ENCODE measurements at regions of chr2 and their contacts with region 1.

Region 1: GRCh38 chr2:44955593-44956392 is 14.3 kb downstream of the SIX3 start:
- DNase-seq: no peak
- ATAC-seq: peak; percentile 91
- H3K4me3 ChIP-seq: peak overlapping the region; percentile 57; the same call in 1 of the 2 replicates
- H3K27ac ChIP-seq: no peak overlapping the region
- H3K4me1 ChIP-seq: no peaks in the 10 kb centered on the region; the same call in 1 of the 2 replicates
- H3K27me3 ChIP-seq: peaks cover 6 to 24% of the 10 kb centered on the region in 2 experiments
- CTCF ChIP-seq: peak; percentile 80 to 99 (median 92)
- EP300 ChIP-seq: no peak
- POLR2A ChIP-seq: no peak
- RAD21 ChIP-seq: peak; percentile 91

Region 2: DNA sequence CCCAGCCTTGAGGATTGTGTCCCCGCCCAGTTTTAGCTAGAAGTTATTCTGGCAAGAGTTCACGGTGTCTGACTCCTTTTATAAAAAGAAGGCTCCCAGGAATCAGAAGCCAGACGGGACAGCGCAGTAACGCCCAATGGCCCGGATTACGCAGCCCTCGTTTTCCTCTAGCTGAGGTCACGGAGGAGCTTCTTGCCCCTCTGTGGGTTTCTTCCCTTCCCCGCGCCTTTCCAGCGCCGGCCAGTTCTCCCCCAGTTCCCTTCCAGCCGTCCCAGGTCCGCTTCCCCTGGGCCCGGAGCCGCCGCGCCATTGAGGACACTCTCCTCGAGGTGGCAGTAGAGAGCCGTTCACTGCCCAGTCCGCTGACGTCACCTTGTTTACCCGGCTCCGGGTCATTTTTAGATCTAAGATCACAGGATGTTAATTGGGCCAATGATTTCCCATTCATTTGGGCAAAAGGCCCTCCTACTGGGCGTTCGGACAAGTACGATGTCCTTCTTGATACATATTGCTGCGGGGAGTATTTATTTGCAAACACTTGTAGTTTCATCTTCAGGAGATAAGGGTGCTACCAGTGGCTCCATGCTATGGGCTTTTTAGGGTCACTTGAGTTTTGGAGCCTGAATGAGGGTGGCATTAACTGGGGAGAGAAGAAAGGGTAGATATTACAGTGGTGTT is 868.6 kb before region 1 on chr2:
- CTCF ChIA-PET with region 1: interaction called, 9 read pairs
- POLR2A ChIA-PET with region 1: no interaction called
- RAD21 ChIA-PET with region 1: no interaction called
- SMC1A ChIA-PET with region 1: interaction called, 11 read pairs
- in situ Hi-C with region 1: no loop called
- intact Hi-C with region 1: loop called (anchors 5 kb)
- DNase-seq: no peak
- ATAC-seq: peak; percentile 79
- H3K4me3 ChIP-seq: peak overlapping the region; percentile 61; the same call in 1 of the 2 replicates
- H3K27ac ChIP-seq: no peak overlapping the region
- H3K4me1 ChIP-seq: peaks cover 13% of the 10 kb centered on the region
- H3K27me3 ChIP-seq: no peaks in the 10 kb centered on the region
- CTCF ChIP-seq: peak; percentile 93 to 97 (median 96); a peak in 5 of 6 replicates
- EP300 ChIP-seq: no peak
- POLR2A ChIP-seq: no peak
- RAD21 ChIP-seq: peak; percentile 95

Region 3: GRCh38 chr2:44462934-44463849 is 492.6 kb before region 1 on chr2:
- CTCF ChIA-PET with region 1: interaction called, 14 read pairs
- POLR2A ChIA-PET with region 1: no interaction called
- RAD21 ChIA-PET with region 1: interaction called, 4 read pairs
- SMC1A ChIA-PET with region 1: interaction called, 8 read pairs
- in situ Hi-C with region 1: no loop called
- intact Hi-C with region 1: no loop called
- DNase-seq: no peak
- ATAC-seq: no peak
- H3K4me3 ChIP-seq: no peak overlapping the region
- H3K27ac ChIP-seq: no peak overlapping the region
- H3K4me1 ChIP-seq: no peaks in the 10 kb centered on the region
- H3K27me3 ChIP-seq: no peaks in the 10 kb centered on the region
- CTCF ChIP-seq: 0 out of 6 replicates have a peak, but pooled peaks of 1 of the 3 experiments have one; percentile 8
- EP300 ChIP-seq: no peak
- POLR2A ChIP-seq: no peak
- RAD21 ChIP-seq: no peak

Region 4: GRCh38 chr2:44549095-44549463 is 406.7 kb before region 1 on chr2:
- CTCF ChIA-PET with region 1: interaction called, 10 read pairs
- POLR2A ChIA-PET with region 1: no interaction called
- RAD21 ChIA-PET with region 1: interaction called, 3 read pairs
- SMC1A ChIA-PET with region 1: interaction called, 5 read pairs
- in situ Hi-C with region 1: loop called (anchors 10 kb)
- intact Hi-C with region 1: no loop called
- DNase-seq: no peak
- ATAC-seq: no peak
- H3K4me3 ChIP-seq: no peak overlapping the region
- H3K27ac ChIP-seq: no peak overlapping the region
- H3K4me1 ChIP-seq: peaks cover 5% of the 10 kb centered on the region
- H3K27me3 ChIP-seq: no peaks in the 10 kb centered on the region
- CTCF ChIP-seq: no peak
- EP300 ChIP-seq: no peak
- POLR2A ChIP-seq: no peak
- RAD21 ChIP-seq: no peak

Region 5: DNA sequence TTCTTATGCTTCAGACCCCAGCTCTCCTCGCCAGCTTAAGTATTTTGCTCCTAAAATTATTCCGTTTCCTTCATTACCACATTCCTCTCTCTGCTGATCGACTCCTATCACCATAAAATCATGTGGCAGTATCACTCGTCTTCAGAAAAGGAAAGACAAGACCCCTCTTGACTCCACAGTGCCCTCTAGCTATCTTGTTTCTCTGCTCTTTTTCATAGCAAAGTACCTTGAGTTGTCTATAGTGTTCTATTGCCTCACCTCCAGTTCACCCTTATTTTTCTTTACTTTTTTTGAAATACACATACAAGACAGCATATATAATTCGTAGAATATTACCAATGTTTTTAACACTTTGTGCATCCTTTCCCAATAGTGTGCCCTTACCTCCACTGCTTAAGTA is 287.5 kb before region 1 on chr2:
- CTCF ChIA-PET with region 1: interaction called, 76 read pairs
- POLR2A ChIA-PET with region 1: no interaction called
- RAD21 ChIA-PET with region 1: interaction called, 20 read pairs
- SMC1A ChIA-PET with region 1: interaction called, 28 read pairs
- in situ Hi-C with region 1: no loop called
- intact Hi-C with region 1: loop called (anchors 5 kb)
- DNase-seq: no peak
- ATAC-seq: peak; percentile 73
- H3K4me3 ChIP-seq: no peak overlapping the region
- H3K27ac ChIP-seq: no peak overlapping the region
- H3K4me1 ChIP-seq: no peaks in the 10 kb centered on the region
- H3K27me3 ChIP-seq: no peaks in the 10 kb centered on the region
- CTCF ChIP-seq: peak; percentile 38 to 55 (median 47); a peak in 5 of 6 replicates
- EP300 ChIP-seq: no peak
- POLR2A ChIP-seq: no peak
- RAD21 ChIP-seq: peak; percentile 64

Region 6: GRCh38 chr2:44715671-44716081 is 240.1 kb before region 1 on chr2:
- CTCF ChIA-PET with region 1: interaction called, 8 read pairs
- POLR2A ChIA-PET with region 1: interaction called, 5 read pairs
- RAD21 ChIA-PET with region 1: interaction called, 6 read pairs
- SMC1A ChIA-PET with region 1: interaction called, 5 read pairs
- in situ Hi-C with region 1: no loop called
- intact Hi-C with region 1: loop called (anchors 10 kb)
- DNase-seq: no peak
- ATAC-seq: peak; percentile 68
- H3K4me3 ChIP-seq: no peak overlapping the region
- H3K27ac ChIP-seq: no peak overlapping the region
- H3K4me1 ChIP-seq: peaks cover 4% of the 10 kb centered on the region; the same call in 1 of the 2 replicates
- H3K27me3 ChIP-seq: no peaks in the 10 kb centered on the region
- CTCF ChIP-seq: peak; percentile 14 to 39 (median 31); a peak in 3 of 6 replicates
- EP300 ChIP-seq: no peak
- POLR2A ChIP-seq: no peak
- RAD21 ChIP-seq: peak; percentile 49

Region 7: DNA sequence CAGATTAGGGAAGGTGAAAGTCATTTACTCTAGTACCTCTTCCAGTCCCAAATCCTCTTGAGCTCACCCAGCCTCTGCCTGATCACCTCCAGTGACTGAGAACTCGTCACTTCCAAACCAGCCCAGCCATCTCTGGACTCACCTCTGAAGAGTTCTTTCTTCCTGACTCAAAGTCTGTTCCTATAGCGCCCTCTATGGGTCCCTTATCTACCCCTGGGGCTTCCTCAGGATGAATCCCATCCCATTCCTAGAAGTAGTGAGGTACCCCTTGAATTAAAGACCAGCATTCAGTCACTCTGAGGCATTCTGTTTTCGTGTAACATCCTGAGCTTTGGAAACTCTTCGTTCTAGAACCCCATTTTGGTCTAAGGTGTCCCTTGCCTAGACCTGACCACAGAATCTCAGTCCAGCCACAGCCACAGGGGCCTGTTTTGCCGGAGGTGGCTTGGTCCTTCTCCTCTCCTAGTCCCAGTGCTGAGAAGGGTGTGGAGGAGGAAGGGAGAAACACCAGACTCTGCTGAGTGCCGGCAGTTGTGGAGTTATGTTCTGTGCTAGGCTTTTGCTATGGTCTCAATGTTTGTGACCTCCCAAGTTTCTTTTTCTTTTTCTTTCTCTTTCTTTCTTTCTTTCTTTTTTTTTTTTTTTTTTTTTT is 18.4 kb after region 1 on chr2:
- CTCF ChIA-PET with region 1: interaction called, 37 read pairs
- POLR2A ChIA-PET with region 1: no interaction called
- RAD21 ChIA-PET with region 1: interaction called, 11 read pairs
- SMC1A ChIA-PET with region 1: interaction called, 25 read pairs
- in situ Hi-C with region 1: no loop called
- intact Hi-C with region 1: no loop called
- DNase-seq: no peak
- ATAC-seq: peak; percentile 72
- H3K4me3 ChIP-seq: no peak overlapping the region
- H3K27ac ChIP-seq: no peak overlapping the region
- H3K4me1 ChIP-seq: no peaks in the 10 kb centered on the region
- H3K27me3 ChIP-seq: no peaks in the 10 kb centered on the region; a peak in 1 of 4 replicates
- CTCF ChIP-seq: peak; percentile 37 to 54 (median 39); a peak in 5 of 6 replicates
- EP300 ChIP-seq: no peak
- POLR2A ChIP-seq: no peak
- RAD21 ChIP-seq: 0 out of 2 replicates have a peak, but pooled peaks have one; percentile 44